ENCODE measurements at regions of chr3 and their contacts with region 1.

Region 1: GRCh38 chr3:14651440-14652251 is at the start of gene CCDC174:
- DNase-seq: peak; percentile 89 to 100 (median 93)
- ATAC-seq: peak; percentile 97
- H3K4me3 ChIP-seq: peak within 1 kb of the TSS; percentile 74 to 85
- H3K4me3 Mint-ChIP-seq: peak within 1 kb of the TSS; percentile 98
- H3K27ac ChIP-seq: peak within 1 kb of the TSS; percentile 95 to 97
- H3K27ac Mint-ChIP-seq: peak within 1 kb of the TSS; percentile 99
- H3K4me1 ChIP-seq: peaks cover 31% of the 10 kb centered on the region
- H3K4me1 Mint-ChIP-seq: peaks cover 60% of the 10 kb centered on the region
- H3K27me3 ChIP-seq: no peaks in the 10 kb centered on the region
- H3K27me3 Mint-ChIP-seq: no peaks in the 10 kb centered on the region
- CTCF ChIP-seq: no peak
- total RNA-seq, gene CCDC174: 48.8 to 50.9 TPM

Region 2: GRCh38 chr3:12841149-12841970 is 1810.3 kb before region 1 on chr3 and contains the start of gene RPL32:
- CTCF ChIA-PET with region 1: no interaction called
- POLR2A ChIA-PET with region 1: interaction called, 3 read pairs
- intact Hi-C with region 1: loop called in 1 of 2 experiments (anchors 10 kb)
- DNase-seq: peak; percentile 72 to 97 (median 84)
- ATAC-seq: peak; percentile 91
- H3K4me3 ChIP-seq: peak within 1 kb of the TSS; percentile 86 to 98
- H3K4me3 Mint-ChIP-seq: peak within 1 kb of the TSS; percentile 98
- H3K27ac ChIP-seq: peak within 1 kb of the TSS; percentile 93 to 95
- H3K27ac Mint-ChIP-seq: peak within 1 kb of the TSS; percentile 99
- H3K4me1 ChIP-seq: peaks cover 29% of the 10 kb centered on the region
- H3K4me1 Mint-ChIP-seq: peaks cover 48% of the 10 kb centered on the region
- H3K27me3 ChIP-seq: no peaks in the 10 kb centered on the region
- H3K27me3 Mint-ChIP-seq: no peaks in the 10 kb centered on the region
- CTCF ChIP-seq: peak; percentile 68
- total RNA-seq, gene RPL32: 4,188 to 4,224 TPM

Region 3: GRCh38 chr3:14124615-14125190 is 526.9 kb before region 1 on chr3 and contains the starts of genes CHCHD4 and TMEM43:
- CTCF ChIA-PET with region 1: interaction called, 3 read pairs
- POLR2A ChIA-PET with region 1: interaction called, 16 read pairs
- intact Hi-C with region 1: loop called in 1 of 2 experiments (anchors 2 kb)
- DNase-seq: peak; percentile 95 to 100 (median 98)
- ATAC-seq: peak; percentile 87
- H3K4me3 ChIP-seq: peak within 1 kb of the TSS; percentile 95 to 100
- H3K4me3 Mint-ChIP-seq: peak within 1 kb of the TSS; percentile 96
- H3K27ac ChIP-seq: peak within 1 kb of the TSS; percentile 89 to 92
- H3K27ac Mint-ChIP-seq: peak within 1 kb of the TSS; percentile 93
- H3K4me1 ChIP-seq: peaks cover 30% of the 10 kb centered on the region
- H3K4me1 Mint-ChIP-seq: peaks cover 56% of the 10 kb centered on the region
- H3K27me3 ChIP-seq: no peaks in the 10 kb centered on the region
- H3K27me3 Mint-ChIP-seq: no peaks in the 10 kb centered on the region
- CTCF ChIP-seq: no peak
- total RNA-seq, gene CHCHD4: 0.71 to 1.7 TPM
- total RNA-seq, gene TMEM43: 20.1 to 24.3 TPM

Region 4: DNA sequence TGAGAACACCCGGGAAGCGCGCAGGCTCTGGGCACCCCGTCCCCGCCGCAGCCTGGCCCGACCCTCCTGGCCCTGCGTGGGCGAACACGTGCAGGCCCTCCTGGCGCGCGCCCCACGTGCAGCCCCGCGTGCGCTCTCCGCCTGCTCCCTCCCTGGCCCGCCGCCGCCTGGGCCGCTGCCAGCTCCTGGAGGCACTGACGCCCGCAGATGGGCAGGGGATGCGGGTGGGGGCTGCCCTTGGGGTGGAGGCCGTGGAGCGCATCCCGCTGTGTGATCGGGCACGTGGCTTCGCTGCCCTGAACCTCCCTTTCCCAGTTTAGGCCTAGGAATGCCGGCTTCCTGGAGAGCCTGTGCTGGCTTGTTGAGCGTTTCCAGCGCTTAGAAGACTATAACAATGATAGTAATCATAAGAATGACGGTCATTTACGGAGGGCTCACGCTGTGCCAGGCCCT is 353.8 kb before region 1 on chr3:
- CTCF ChIA-PET with region 1: no interaction called
- POLR2A ChIA-PET with region 1: no interaction called
- intact Hi-C with region 1: no loop called
- DNase-seq: no peak
- ATAC-seq: no peak
- H3K4me3 ChIP-seq: no peak overlapping the region
- H3K4me3 Mint-ChIP-seq: no peak overlapping the region
- H3K27ac ChIP-seq: no peak overlapping the region
- H3K27ac Mint-ChIP-seq: no peak overlapping the region
- H3K4me1 ChIP-seq: no peaks in the 10 kb centered on the region
- H3K4me1 Mint-ChIP-seq: no peaks in the 10 kb centered on the region
- H3K27me3 ChIP-seq: no peaks in the 10 kb centered on the region
- H3K27me3 Mint-ChIP-seq: peaks cover 2% of the 10 kb centered on the region
- CTCF ChIP-seq: no peak

Region 5: GRCh38 chr3:14480207-14481025 is 171.2 kb before region 1 on chr3:
- CTCF ChIA-PET with region 1: no interaction called
- POLR2A ChIA-PET with region 1: no interaction called
- intact Hi-C with region 1: no loop called
- DNase-seq: no peak
- ATAC-seq: no peak
- H3K4me3 ChIP-seq: no peak overlapping the region
- H3K4me3 Mint-ChIP-seq: no peak overlapping the region
- H3K27ac ChIP-seq: no peak overlapping the region
- H3K27ac Mint-ChIP-seq: no peak overlapping the region
- H3K4me1 ChIP-seq: no peaks in the 10 kb centered on the region
- H3K4me1 Mint-ChIP-seq: no peaks in the 10 kb centered on the region
- H3K27me3 ChIP-seq: no peaks in the 10 kb centered on the region
- H3K27me3 Mint-ChIP-seq: no peaks in the 10 kb centered on the region
- CTCF ChIP-seq: no peak

Region 6: GRCh38 chr3:14921078-14921616 is 269.5 kb after region 1 on chr3:
- CTCF ChIA-PET with region 1: interaction called, 11 read pairs
- POLR2A ChIA-PET with region 1: interaction called, 4 read pairs
- intact Hi-C with region 1: no loop called
- DNase-seq: peak; percentile 68 to 93 (median 83)
- ATAC-seq: peak; percentile 99
- H3K4me3 ChIP-seq: no peak overlapping the region
- H3K4me3 Mint-ChIP-seq: no peak overlapping the region
- H3K27ac ChIP-seq: no peak overlapping the region
- H3K27ac Mint-ChIP-seq: no peak overlapping the region
- H3K4me1 ChIP-seq: peaks cover 4% of the 10 kb centered on the region
- H3K4me1 Mint-ChIP-seq: no peaks in the 10 kb centered on the region
- H3K27me3 ChIP-seq: no peaks in the 10 kb centered on the region
- H3K27me3 Mint-ChIP-seq: no peaks in the 10 kb centered on the region
- CTCF ChIP-seq: peak; percentile 99

Region 7: DNA sequence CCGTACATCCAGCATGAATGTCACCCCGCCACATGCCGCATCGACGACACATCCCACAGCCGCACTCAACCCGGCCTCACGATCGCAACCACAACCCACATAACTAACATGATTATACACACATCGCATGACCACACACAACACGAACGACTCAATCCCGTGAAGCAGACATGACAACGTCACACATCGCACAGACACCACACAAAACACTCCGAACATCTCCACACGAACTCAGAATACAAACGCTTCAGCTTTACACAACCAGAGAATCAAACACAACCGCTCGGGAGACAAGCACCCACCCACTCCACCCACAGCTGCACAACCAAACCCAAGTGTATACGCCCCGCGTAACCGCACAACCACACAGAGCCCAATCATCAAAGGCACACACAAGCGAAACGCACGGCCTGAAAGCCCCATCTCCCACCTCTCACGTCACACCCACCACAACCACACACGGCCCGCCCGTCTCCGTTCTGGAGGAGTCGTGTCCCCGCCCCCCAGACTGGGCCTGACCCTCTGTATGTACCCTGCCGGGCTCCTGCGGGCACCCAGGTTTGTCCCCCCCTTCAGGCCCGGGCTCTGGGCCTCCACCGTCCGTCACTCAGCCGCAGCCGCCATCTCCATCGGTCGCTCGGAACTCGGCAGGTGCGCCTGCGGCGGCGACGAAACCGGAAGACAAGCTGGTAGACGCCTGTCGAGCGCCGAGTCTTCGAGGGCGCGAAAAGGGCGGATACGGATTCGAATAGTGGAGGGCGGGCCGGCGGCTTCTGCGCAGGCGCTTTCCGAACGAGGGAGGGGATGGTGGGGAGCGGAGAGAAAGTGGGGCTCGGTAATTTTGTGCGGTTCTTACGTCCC is 447.1 kb after region 1 on chr3 and contains the start of gene RBSN:
- CTCF ChIA-PET with region 1: no interaction called
- POLR2A ChIA-PET with region 1: interaction called, 17 read pairs
- intact Hi-C with region 1: loop called (anchors 1 to 2 kb)
- DNase-seq: peak; percentile 87 to 98 (median 94)
- ATAC-seq: peak; percentile 76
- H3K4me3 ChIP-seq: peak within 1 kb of the TSS; percentile 71 to 76
- H3K4me3 Mint-ChIP-seq: peak within 1 kb of the TSS; percentile 88
- H3K27ac ChIP-seq: peak within 1 kb of the TSS; percentile 96 to 98
- H3K27ac Mint-ChIP-seq: peak within 1 kb of the TSS; percentile 95
- H3K4me1 ChIP-seq: peaks cover 16% of the 10 kb centered on the region
- H3K4me1 Mint-ChIP-seq: peaks cover 31% of the 10 kb centered on the region
- H3K27me3 ChIP-seq: no peaks in the 10 kb centered on the region
- H3K27me3 Mint-ChIP-seq: no peaks in the 10 kb centered on the region
- CTCF ChIP-seq: no peak
- total RNA-seq, gene RBSN: 41.9 to 48.1 TPM

Region 8: GRCh38 chr3:15859507-15860013 is 1207.9 kb after region 1 on chr3:
- CTCF ChIA-PET with region 1: no interaction called
- POLR2A ChIA-PET with region 1: no interaction called
- intact Hi-C with region 1: loop called in 1 of 2 experiments (anchors 5 kb)
- DNase-seq: peak; percentile 42 to 88 (median 73)
- ATAC-seq: peak; percentile 78
- H3K4me3 ChIP-seq: peak overlapping the region; percentile 73 to 86
- H3K4me3 Mint-ChIP-seq: peak overlapping the region; percentile 97
- H3K27ac ChIP-seq: peak overlapping the region in 1 of 2 experiments; percentile 46
- H3K27ac Mint-ChIP-seq: peak overlapping the region; percentile 95
- H3K4me1 ChIP-seq: peaks cover 20% of the 10 kb centered on the region
- H3K4me1 Mint-ChIP-seq: peaks cover 35% of the 10 kb centered on the region
- H3K27me3 ChIP-seq: no peaks in the 10 kb centered on the region
- H3K27me3 Mint-ChIP-seq: no peaks in the 10 kb centered on the region
- CTCF ChIP-seq: no peak